ENCODE measurements at regions of chrX and their contacts with region 1.

Region 1: DNA sequence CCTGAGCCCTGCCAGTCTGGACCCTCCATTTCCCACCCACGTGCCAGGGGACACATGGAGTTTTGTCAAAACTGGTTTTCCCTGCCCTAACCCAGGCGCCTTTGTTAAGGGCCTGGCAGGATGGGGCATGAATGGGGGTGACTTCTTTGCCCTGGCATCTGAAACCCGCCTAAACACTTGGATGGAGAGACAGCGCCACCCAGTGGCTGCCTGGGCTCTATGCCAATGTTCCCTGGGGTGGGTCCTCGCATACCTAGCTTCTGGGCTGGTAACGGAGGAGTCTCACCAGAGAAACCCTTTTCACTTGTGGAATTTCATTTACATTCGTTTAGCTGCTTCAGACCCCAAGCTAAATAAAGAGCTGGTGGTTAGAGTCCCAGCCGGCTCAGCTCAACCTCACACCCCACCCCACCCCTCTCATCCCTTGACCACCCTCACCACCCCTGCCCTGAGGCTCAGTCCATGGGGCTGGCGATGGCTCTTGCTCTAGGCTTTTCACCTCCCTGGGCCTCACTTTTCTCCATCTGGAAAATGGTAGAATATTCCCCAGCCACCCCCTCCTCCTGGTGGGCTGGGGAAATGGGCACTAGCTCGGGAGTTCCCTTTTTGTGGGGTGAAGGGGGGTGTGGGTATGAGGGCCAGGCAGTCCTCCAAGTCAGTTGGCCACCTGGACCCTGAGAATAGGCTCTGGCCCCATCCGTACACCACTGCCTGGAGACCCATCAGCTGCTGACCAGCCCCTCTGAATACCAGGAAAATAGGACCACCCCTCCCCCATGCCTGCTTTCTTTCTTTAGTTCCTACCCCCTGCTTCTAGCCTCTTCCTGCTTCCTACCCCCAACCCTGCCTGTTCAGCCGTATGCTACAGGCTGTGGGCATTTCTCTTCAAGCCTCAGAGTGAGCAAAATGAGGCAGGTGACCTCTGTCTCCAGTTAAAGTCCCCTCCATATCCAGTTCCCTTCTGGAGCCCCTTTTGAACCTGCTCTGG is 57.1 kb upstream of the PJA1 start:
- DNase-seq: peak; percentile 46
- H3K4me3 Mint-ChIP-seq: no peak overlapping the region
- H3K27ac Mint-ChIP-seq: no peak overlapping the region
- H3K4me1 Mint-ChIP-seq: no peaks in the 10 kb centered on the region
- H3K27me3 Mint-ChIP-seq: peaks cover 2% of the 10 kb centered on the region

Region 2: GRCh38 chrX:69014200-69014599 is 208.2 kb before region 1 on chrX:
- intact Hi-C with region 1: no loop called
- DNase-seq: no peak
- H3K4me3 Mint-ChIP-seq: no peak overlapping the region
- H3K27ac Mint-ChIP-seq: no peak overlapping the region
- H3K4me1 Mint-ChIP-seq: no peaks in the 10 kb centered on the region
- H3K27me3 Mint-ChIP-seq: peaks cover 3% of the 10 kb centered on the region

Region 3: GRCh38 chrX:69093960-69094871 is 128.2 kb before region 1 on chrX:
- intact Hi-C with region 1: loop called (anchors 2 kb)
- DNase-seq: peak; percentile 8
- H3K4me3 Mint-ChIP-seq: no peak overlapping the region
- H3K27ac Mint-ChIP-seq: no peak overlapping the region
- H3K4me1 Mint-ChIP-seq: no peaks in the 10 kb centered on the region
- H3K27me3 Mint-ChIP-seq: no peaks in the 10 kb centered on the region

Region 4: GRCh38 chrX:69158166-69158980 is 64.0 kb before region 1 on chrX:
- intact Hi-C with region 1: loop called (anchors 1 kb)
- DNase-seq: peak; percentile 9
- H3K4me3 Mint-ChIP-seq: no peak overlapping the region
- H3K27ac Mint-ChIP-seq: no peak overlapping the region
- H3K4me1 Mint-ChIP-seq: peaks cover 11% of the 10 kb centered on the region
- H3K27me3 Mint-ChIP-seq: no peaks in the 10 kb centered on the region

Measured in activated T-helper 2 cell treated with anti-CD3 and anti-CD28 coated beads, Interferon-gamma antibody, Interleukin-2, Interleukin-4, amounts not matched to agents 10 μg/mL and 5 μg/mL and 100 μg/mL, durations not matched to agents 14 hours and 24 hours and 36 hours (primary cell).